GM10248 (cell line): ENCODE measurements at regions of chr12 and their contacts with region 1.

Region 1: DNA sequence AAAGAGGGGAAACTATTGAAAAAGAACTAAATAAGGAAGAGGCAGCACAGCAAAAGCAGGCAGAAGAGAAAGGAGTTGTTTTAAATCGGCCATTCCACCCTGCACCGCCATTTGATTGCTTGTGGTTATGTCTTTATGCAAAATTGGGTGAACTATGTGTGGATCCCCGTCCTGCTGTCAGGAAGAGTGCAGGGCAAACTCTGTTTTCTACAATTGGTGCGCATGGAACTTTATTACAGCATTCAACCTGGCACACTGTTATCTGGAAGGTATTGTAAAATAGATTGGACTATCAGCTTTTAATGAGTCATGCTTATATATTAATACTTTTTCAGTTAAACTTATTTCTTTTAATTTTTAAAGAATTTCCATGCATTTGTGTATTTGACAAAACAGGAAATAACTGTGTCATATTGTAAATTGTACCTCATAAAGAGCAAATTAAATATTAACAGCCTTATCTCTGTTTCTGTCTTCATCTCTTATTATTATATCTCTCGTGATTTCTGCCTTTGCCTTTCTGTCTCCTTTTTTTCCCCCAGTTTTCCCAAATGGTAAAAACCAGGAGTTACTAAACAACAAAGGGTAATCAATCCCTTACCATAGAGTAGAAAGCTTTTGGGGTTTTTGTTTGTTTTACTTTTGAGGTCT is 86.4 kb downstream of the MON2 start:
- DNase-seq: no peak
- CTCF ChIP-seq: no peak

Region 2: GRCh38 chr12:62291864-62292760 is 260.9 kb before region 1 on chr12:
- CTCF ChIA-PET with region 1: no interaction called
- POLR2A ChIA-PET with region 1: no interaction called
- DNase-seq: no peak
- CTCF ChIP-seq: no peak

Region 3: DNA sequence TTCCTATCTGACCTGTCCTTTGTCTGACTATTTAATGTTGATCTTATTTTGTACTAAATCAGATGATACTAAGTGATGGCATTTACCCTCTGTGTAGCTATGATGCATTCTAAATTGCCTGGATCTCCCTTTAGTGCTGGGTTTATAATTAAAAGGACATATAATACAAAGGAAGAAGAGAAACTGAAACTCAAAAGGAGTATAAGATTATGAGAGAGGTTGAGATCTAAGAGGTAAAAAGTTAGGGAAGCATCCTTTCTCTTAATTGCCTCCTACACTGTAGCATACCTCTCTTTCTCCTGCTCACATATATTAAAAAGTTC is 173.3 kb before region 1 on chr12:
- CTCF ChIA-PET with region 1: no interaction called
- POLR2A ChIA-PET with region 1: no interaction called
- DNase-seq: no peak
- CTCF ChIP-seq: no peak

Region 4: DNA sequence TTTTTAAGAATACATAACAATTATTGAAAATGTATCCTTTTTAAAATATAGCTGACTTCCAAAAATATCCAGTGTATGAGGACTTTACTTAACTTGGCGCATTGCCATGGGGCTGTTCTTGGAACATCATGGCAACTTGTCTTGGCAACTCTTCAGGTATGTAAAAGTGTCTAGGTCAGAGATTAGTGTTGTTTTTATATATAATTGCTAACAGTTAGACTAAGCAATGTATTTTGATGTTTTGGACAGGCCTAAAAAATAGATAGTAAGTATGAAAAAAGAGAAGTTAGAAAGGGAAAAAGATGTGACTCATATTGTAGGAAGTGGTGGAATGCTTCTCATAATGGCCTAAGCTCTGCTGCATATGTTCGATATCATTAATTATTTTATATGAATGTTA is 15.5 kb before region 1 on chr12:
- CTCF ChIA-PET with region 1: interaction called, 11 read pairs
- POLR2A ChIA-PET with region 1: no interaction called
- DNase-seq: no peak
- CTCF ChIP-seq: no peak